Right ventricle myocardium inferior (tissue), 1 donor: ENCODE measurements at regions of chr5 and their contacts with region 1.

Region 1: GRCh38 chr5:114449860-114450421 is 88.1 kb downstream of the KCNN2 start:
- DNase-seq: peak; percentile 69
- ATAC-seq: peak; percentile 94

Region 2: GRCh38 chr5:113678924-113679575 is 770.9 kb before region 1 on chr5:
- intact Hi-C with region 1: loop called (anchors 2 kb)
- DNase-seq: no peak
- ATAC-seq: no peak

Region 3: GRCh38 chr5:114018186-114018585 is 431.8 kb before region 1 on chr5:
- intact Hi-C with region 1: loop called (anchors 2 kb)
- DNase-seq: no peak
- ATAC-seq: no peak

Region 4: GRCh38 chr5:114101153-114101552 is 348.8 kb before region 1 on chr5:
- intact Hi-C with region 1: loop called (anchors 2 kb)
- DNase-seq: no peak
- ATAC-seq: no peak

Region 5: DNA sequence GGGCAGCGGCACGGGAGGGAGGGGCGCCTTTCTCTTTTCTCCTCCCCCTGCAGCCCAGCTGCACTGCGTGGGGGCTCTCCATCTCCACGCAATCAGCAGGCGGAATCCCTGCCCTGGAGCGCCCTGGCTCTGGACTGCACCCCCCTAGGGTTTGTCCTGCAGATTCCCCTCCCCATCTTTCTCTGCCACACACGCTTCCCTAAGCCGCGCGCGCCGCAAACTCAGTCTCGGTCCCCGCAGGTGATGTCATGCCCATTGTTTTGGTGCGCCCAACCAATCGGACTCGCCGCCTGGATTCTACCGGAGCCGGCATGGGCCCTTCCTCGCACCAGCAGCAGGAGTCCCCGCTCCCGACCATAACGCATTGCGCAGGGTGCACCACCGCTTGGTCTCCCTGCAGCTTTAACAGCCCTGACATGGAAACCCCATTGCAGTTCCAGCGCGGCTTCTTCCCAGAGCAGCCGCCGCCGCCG is 88.2 kb before region 1 on chr5 and contains the start of gene KCNN2:
- intact Hi-C with region 1: loop called (anchors 10 kb)
- DNase-seq: peak; percentile 83
- ATAC-seq: peak; percentile 93
- total RNA-seq, gene KCNN2: 9.3 TPM

Region 6: DNA sequence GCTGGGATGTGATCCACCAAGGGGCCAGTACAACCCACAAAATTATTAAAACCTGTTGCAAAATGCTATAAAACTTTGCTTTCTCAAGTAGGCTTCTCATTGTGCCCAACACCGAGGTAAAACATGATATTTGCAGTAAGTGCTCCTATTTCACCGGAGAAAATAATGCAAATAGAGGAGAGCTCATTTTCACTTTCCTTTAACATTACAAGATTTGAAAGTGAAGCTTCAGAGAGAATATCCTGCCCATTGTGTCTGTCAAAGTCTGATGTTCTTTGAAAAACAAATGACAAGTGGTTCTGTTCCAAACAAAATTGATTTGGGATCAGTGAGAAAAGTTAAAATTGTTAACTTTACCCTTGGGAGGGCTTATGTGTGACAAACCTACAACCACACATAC is 199.0 kb after region 1 on chr5:
- intact Hi-C with region 1: no loop called
- DNase-seq: no peak
- ATAC-seq: no peak

Region 7: GRCh38 chr5:114999176-114999575 is 549.2 kb after region 1 on chr5:
- intact Hi-C with region 1: no loop called
- DNase-seq: no peak
- ATAC-seq: no peak